Gastrocnemius medialis (tissue), 4 donors: ENCODE measurements at regions of chr4 and their contacts with region 1.

Region 1: DNA sequence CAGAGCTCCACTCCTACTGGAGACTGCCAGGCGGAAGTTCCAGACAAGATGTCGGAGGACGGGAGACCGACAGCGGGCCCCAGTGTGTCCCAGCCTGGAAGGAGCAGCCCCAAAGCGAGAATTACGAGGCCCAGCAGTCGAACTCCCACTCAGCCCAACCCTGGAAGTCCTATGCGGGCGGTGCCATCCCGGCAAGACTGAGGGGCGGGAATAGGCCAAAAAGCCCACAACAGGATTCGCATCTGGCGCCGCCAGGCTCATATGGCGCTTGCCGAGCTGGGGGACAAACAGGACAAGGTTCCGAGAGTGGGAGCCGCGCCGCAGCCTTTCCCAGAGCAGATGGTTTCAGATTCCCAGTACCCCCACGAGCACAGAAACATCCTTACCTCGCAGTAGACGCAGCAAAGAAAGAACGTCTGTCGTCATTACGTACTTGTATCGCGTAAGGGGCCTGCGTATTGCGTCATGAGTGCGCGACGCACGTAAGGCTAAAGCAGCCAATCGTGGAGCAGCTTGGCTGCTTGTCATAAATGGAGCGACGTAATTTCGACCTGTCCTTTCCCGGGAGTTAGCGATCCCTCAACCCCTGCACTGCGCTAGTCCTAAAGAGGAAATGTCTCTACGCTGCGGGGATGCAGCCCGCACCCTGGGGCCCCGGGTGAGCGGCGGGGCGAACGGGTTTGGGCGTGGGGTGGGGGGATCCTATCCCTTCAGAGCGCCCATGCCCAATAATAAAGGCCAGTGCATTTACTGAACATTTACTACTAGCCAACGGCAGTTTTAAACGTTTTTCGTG is at the starts of genes LIAS and RPL9:
- DNase-seq: peak; percentile 94 to 98
- ATAC-seq: peak; percentile 96 to 98
- H3K4me3 ChIP-seq: peak within 1 kb of the TSS; percentile 86 to 97 (median 90)
- H3K27ac ChIP-seq: peak within 1 kb of the TSS; percentile 90 to 97 (median 95)
- H3K4me1 ChIP-seq: peaks cover 19 to 21% of the 10 kb centered on the region in 2 donors
- H3K27me3 ChIP-seq: no peaks in the 10 kb centered on the region
- CTCF ChIP-seq: peak in 1 of 5 experiments; percentile 18
- POLR2A ChIP-seq: peak; percentile 95 to 96
- total RNA-seq, gene LIAS: 10.3 to 20.2 (median 12.1) TPM
- total RNA-seq, gene RPL9: 2,556 to 3,080 (median 2,834) TPM

Region 2: DNA sequence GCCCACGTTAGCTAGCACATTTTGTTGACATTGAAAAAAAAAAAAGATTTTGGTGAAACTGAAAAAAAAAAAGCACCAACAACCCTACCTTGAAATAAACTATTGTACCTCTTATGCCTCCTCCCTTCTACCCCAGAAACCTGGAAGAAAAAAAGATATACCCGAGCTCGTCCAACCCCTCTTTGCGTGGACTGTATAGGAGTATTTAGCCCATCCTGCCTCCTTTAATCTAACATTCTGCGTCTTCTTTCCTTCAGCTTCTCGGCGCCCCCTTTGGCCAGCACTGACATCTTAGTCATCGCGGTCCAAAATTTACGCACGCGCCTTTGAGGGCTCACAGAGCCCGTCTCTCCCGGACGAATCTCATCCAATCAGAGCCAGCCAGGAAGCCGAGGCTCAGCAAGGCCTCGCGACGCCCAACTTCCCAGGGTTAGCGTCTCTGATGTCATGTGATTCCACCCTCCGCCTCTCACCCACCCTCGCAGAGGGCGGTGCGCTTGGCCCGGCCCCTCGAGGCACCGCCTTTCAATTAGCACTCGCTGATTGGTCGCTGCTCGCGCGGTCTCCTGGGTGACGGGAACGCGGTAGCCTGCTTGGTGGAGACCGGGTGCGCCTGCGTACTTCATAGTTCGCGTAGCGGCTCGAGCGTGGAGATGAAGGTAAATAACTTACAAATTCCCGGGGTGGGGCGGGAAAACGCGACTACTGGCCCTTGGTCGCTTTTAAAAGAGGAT is 276.6 kb before region 1 on chr4 and contains the start of gene WDR19:
- in situ Hi-C with region 1: no loop called
- intact Hi-C with region 1: loop called (anchors 1 kb)
- DNase-seq: peak; percentile 99
- ATAC-seq: peak; percentile 99 to 100
- H3K4me3 ChIP-seq: peak within 1 kb of the TSS; percentile 70 to 94 (median 74)
- H3K27ac ChIP-seq: peak within 1 kb of the TSS; percentile 81 to 87 (median 83)
- H3K4me1 ChIP-seq: peaks cover 9 to 16% of the 10 kb centered on the region in 2 donors
- H3K27me3 ChIP-seq: no peaks in the 10 kb centered on the region
- CTCF ChIP-seq: peak in 3 of 5 experiments; percentile 12 to 58 (median 45)
- POLR2A ChIP-seq: peak; percentile 45 to 59
- total RNA-seq, gene WDR19: 6.1 to 16.2 (median 9.6) TPM

Region 3: DNA sequence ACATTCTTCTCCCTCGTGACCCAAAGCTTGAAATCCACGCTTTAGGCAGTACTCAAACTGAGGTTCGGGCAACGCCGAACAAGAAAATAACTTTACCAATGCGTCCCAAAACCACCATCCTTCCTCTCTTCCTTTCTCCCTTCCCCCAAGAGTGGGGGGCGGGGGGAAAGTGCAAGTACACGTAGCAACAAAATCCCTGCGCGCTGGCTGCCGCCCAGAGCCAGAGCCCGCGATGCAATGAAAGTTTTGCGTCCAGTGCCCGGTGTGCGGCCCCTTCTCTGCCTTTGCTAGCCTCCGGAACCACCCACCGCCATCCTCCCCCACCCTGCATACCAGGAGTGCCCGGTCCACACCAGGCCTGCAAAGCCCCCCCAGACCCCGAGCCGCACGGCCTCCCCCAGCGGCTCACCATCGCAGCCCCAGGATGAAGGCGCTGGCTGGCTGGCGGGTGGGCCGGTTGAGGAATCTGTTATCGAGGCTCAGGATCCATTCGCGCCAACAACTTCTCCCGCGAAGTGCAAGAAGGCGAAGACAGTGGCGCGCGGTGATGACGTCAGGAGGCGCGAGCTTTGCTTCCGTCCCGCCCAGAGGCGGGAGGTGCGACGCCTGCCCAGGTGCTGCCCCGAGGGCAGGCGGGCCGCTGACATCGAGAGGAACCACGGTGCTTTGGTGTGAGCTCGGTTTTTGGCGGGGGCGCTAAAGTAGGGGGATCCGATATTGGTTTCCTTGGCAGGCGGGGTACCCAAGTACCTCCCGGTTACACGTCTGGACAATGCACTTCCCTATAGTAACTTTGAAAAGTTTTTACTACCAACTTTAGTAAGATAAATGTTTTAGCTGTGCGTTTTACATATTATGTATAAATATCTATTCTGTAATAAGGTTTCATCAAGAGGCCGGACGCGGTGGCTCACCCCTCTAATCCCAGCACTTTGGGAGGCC is 92.6 kb before region 1 on chr4 and contains the start of gene RFC1:
- in situ Hi-C with region 1: no loop called
- intact Hi-C with region 1: loop called (anchors 5 kb)
- DNase-seq: peak; percentile 72 to 84
- ATAC-seq: peak; percentile 91 to 97
- H3K4me3 ChIP-seq: peak within 1 kb of the TSS; percentile 87 to 97 (median 92)
- H3K27ac ChIP-seq: peak within 1 kb of the TSS; percentile 73 to 79 (median 78)
- H3K4me1 ChIP-seq: peaks cover 10 to 16% of the 10 kb centered on the region in 2 donors
- H3K27me3 ChIP-seq: no peaks in the 10 kb centered on the region
- CTCF ChIP-seq: no peak
- POLR2A ChIP-seq: peak in 1 of 2 donors; percentile 13
- total RNA-seq, gene RFC1: 13.9 to 47.9 (median 21.6) TPM

Region 4: GRCh38 chr4:39527273-39528060 is 68.8 kb after region 1 on chr4 and contains the start of gene UGDH:
- in situ Hi-C with region 1: no loop called
- intact Hi-C with region 1: loop called (anchors 2 kb)
- DNase-seq: peak; percentile 94 to 96
- ATAC-seq: peak; percentile 92 to 94
- H3K4me3 ChIP-seq: peak within 1 kb of the TSS; percentile 84 to 95 (median 91)
- H3K27ac ChIP-seq: peak within 1 kb of the TSS; percentile 91 to 98 (median 95)
- H3K4me1 ChIP-seq: peaks cover 24% of the 10 kb centered on the region in 2 donors
- H3K27me3 ChIP-seq: no peaks in the 10 kb centered on the region
- CTCF ChIP-seq: no peak
- POLR2A ChIP-seq: peak; percentile 88 to 89
- total RNA-seq, gene UGDH: 6.1 to 12.7 (median 8.8) TPM

Region 5: GRCh38 chr4:39697740-39698423 is 239.2 kb after region 1 on chr4 and contains the start of gene UBE2K:
- in situ Hi-C with region 1: no loop called
- intact Hi-C with region 1: loop called (anchors 2 kb)
- DNase-seq: peak; percentile 70 to 83
- ATAC-seq: peak; percentile 81 to 84
- H3K4me3 ChIP-seq: peak within 1 kb of the TSS; percentile 59 to 93 (median 84)
- H3K27ac ChIP-seq: peak within 1 kb of the TSS; percentile 87 to 97 (median 96)
- H3K4me1 ChIP-seq: peaks cover 32 to 35% of the 10 kb centered on the region in 2 donors
- H3K27me3 ChIP-seq: no peaks in the 10 kb centered on the region
- CTCF ChIP-seq: no peak
- POLR2A ChIP-seq: peak; percentile 90 to 93
- total RNA-seq, gene UBE2K: 28.7 to 38.8 (median 32.1) TPM

Region 6: GRCh38 chr4:39977489-39978377 is 519.0 kb after region 1 on chr4 and contains the start of gene PDS5A:
- in situ Hi-C with region 1: loop called in 1 of 4 experiments (anchors 10 kb)
- intact Hi-C with region 1: loop called (anchors 1 kb)
- DNase-seq: peak; percentile 73 to 86
- ATAC-seq: peak; percentile 90 to 91
- H3K4me3 ChIP-seq: peak within 1 kb of the TSS; percentile 74 to 96 (median 94)
- H3K27ac ChIP-seq: peak within 1 kb of the TSS; percentile 95 to 99 (median 98)
- H3K4me1 ChIP-seq: peaks cover 10 to 11% of the 10 kb centered on the region in 2 donors
- H3K27me3 ChIP-seq: no peaks in the 10 kb centered on the region
- CTCF ChIP-seq: peak; percentile 69 to 97 (median 97)
- POLR2A ChIP-seq: peak; percentile 92 to 94
- total RNA-seq, gene PDS5A: 28.3 to 40.6 (median 36.7) TPM

Region 7: DNA sequence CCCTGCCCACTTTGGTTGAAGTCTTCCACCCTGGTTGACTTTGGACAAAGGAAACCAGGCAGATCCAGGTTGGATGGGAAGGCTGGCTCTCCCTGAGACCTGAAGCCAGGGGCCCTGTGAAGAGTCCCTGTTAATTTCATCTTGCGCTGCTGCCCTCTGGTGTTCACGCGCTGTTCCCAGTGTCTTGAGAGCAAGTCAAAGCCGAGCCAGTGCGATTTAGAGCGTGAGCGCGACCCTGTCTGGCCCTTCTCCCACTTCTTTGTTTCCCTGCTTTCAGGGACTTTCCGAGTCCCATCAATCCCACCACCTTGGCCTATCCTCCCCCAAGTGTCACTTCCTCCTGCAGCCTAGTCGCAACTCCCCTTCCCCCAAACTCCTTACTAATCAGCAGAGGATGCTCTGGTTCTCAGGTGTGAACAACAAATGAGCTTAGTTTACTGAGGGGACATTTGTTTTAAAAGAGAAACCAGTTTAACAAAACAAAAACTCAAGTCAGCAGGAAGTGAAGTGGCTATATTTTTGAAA is 850.6 kb after region 1 on chr4:
- in situ Hi-C with region 1: loop called in 1 of 4 experiments (anchors 25 kb)
- intact Hi-C with region 1: no loop called
- DNase-seq: peak; percentile 49 to 61
- ATAC-seq: peak; percentile 68 to 71
- H3K4me3 ChIP-seq: no peak overlapping the region
- H3K27ac ChIP-seq: no peak overlapping the region
- H3K4me1 ChIP-seq: no peaks in the 10 kb centered on the region
- H3K27me3 ChIP-seq: no peaks in the 10 kb centered on the region
- CTCF ChIP-seq: peak; percentile 57 to 83 (median 73)
- POLR2A ChIP-seq: no peak